Activated B cell treated with CpG ODN at 0.5 μM for 24 hours (primary cell): ENCODE measurements at regions of chr4 and their contacts with region 1.

Region 1: GRCh38 chr4:128809477-128810330 is at the start of gene JADE1:
- DNase-seq: peak; percentile 79
- ATAC-seq: peak; percentile 69
- H3K4me3 Mint-ChIP-seq: peak within 1 kb of the TSS; percentile 97
- H3K27ac Mint-ChIP-seq: peak within 1 kb of the TSS; percentile 98
- H3K4me1 Mint-ChIP-seq: peaks cover 15% of the 10 kb centered on the region
- H3K27me3 Mint-ChIP-seq: no peaks in the 10 kb centered on the region
- CTCF ChIP-seq: no peak
- total RNA-seq, gene JADE1: 26.2 and 29.2 TPM in 2 replicates

Region 2: GRCh38 chr4:127965062-127965802 is 844.5 kb before region 1 on chr4 and contains the starts of genes ABHD18 and MFSD8:
- CTCF ChIA-PET with region 1: no interaction called
- POLR2A ChIA-PET with region 1: interaction called, 3 read pairs
- intact Hi-C with region 1: loop called (anchors 1 kb)
- DNase-seq: peak; percentile 96
- ATAC-seq: peak; percentile 96
- H3K4me3 Mint-ChIP-seq: peak within 1 kb of the TSS; percentile 98
- H3K27ac Mint-ChIP-seq: peak within 1 kb of the TSS; percentile 96
- H3K4me1 Mint-ChIP-seq: peaks cover 34% of the 10 kb centered on the region
- H3K27me3 Mint-ChIP-seq: no peaks in the 10 kb centered on the region
- CTCF ChIP-seq: no peak
- total RNA-seq, gene ABHD18: 12.8 and 13.9 TPM in 2 replicates
- total RNA-seq, gene MFSD8: 30.8 and 31.1 TPM in 2 replicates

Region 3: GRCh38 chr4:128287871-128288688 is 521.6 kb before region 1 on chr4:
- CTCF ChIA-PET with region 1: no interaction called
- POLR2A ChIA-PET with region 1: interaction called, 17 read pairs
- intact Hi-C with region 1: loop called (anchors 1 kb)
- DNase-seq: peak; percentile 97
- ATAC-seq: peak; percentile 88
- H3K4me3 Mint-ChIP-seq: peak overlapping the region; percentile 83
- H3K27ac Mint-ChIP-seq: peak overlapping the region; percentile 80
- H3K4me1 Mint-ChIP-seq: peaks cover 29% of the 10 kb centered on the region
- H3K27me3 Mint-ChIP-seq: no peaks in the 10 kb centered on the region
- CTCF ChIP-seq: no peak

Region 4: GRCh38 chr4:128675083-128675482 is 134.6 kb before region 1 on chr4:
- CTCF ChIA-PET with region 1: no interaction called
- POLR2A ChIA-PET with region 1: no interaction called
- intact Hi-C with region 1: loop called (anchors 5 kb)
- DNase-seq: no peak
- ATAC-seq: peak; percentile 73
- H3K4me3 Mint-ChIP-seq: peak overlapping the region; percentile 55
- H3K27ac Mint-ChIP-seq: peak overlapping the region; percentile 71
- H3K4me1 Mint-ChIP-seq: peaks cover 25% of the 10 kb centered on the region
- H3K27me3 Mint-ChIP-seq: no peaks in the 10 kb centered on the region
- CTCF ChIP-seq: no peak

Region 5: GRCh38 chr4:128831531-128832242 is 22.0 kb after region 1 on chr4:
- CTCF ChIA-PET with region 1: interaction called, 6 read pairs
- POLR2A ChIA-PET with region 1: interaction called, 7 read pairs
- intact Hi-C with region 1: loop called (anchors 1 kb)
- DNase-seq: no peak
- ATAC-seq: peak; percentile 50
- H3K4me3 Mint-ChIP-seq: no peak overlapping the region
- H3K27ac Mint-ChIP-seq: no peak overlapping the region
- H3K4me1 Mint-ChIP-seq: peaks cover 54% of the 10 kb centered on the region
- H3K27me3 Mint-ChIP-seq: no peaks in the 10 kb centered on the region
- CTCF ChIP-seq: no peak

Region 6: GRCh38 chr4:129093191-129093920 is 283.7 kb after region 1 on chr4 and contains the start of gene SCLT1:
- CTCF ChIA-PET with region 1: interaction called, 3 read pairs
- POLR2A ChIA-PET with region 1: interaction called, 15 read pairs
- intact Hi-C with region 1: loop called (anchors 1 kb)
- DNase-seq: peak; percentile 94
- ATAC-seq: peak; percentile 92
- H3K4me3 Mint-ChIP-seq: no peak within 1 kb of the TSS
- H3K27ac Mint-ChIP-seq: no peak within 1 kb of the TSS
- H3K4me1 Mint-ChIP-seq: peaks cover 45% of the 10 kb centered on the region
- H3K27me3 Mint-ChIP-seq: no peaks in the 10 kb centered on the region
- CTCF ChIP-seq: no peak
- total RNA-seq, gene SCLT1: 24.5 and 25.0 TPM in 2 replicates